Stomach (tissue), 19 donors: ENCODE measurements at regions of chr4 and their contacts with region 1.

Region 1: GRCh38 chr4:118352843-118353533 is at the start of gene PRSS12:
- DNase-seq: peak; percentile 77 to 92
- H3K4me3 ChIP-seq: peak within 1 kb of the TSS; percentile 58 to 67 (median 60)
- H3K27ac ChIP-seq: peak within 1 kb of the TSS; percentile 52 to 93 (median 77)
- H3K4me1 ChIP-seq: peaks cover 14 to 24% (median 21%) of the 10 kb centered on the region in 4 donors
- H3K27me3 ChIP-seq: peaks cover 0 to 62% (median 26%) of the 10 kb centered on the region in 3 donors
- CTCF ChIP-seq: peak in 5 of 7 experiments; percentile 18 to 85 (median 61)
- EP300 ChIP-seq: no peak
- POLR2A ChIP-seq: no peak
- total RNA-seq, gene PRSS12: 0.45 to 21.7 (median 14.0) TPM

Region 2: GRCh38 chr4:118280501-118281218 is 72.3 kb before region 1 on chr4:
- intact Hi-C with region 1: loop called (anchors 5 kb)
- DNase-seq: peak; percentile 55 to 91
- H3K4me3 ChIP-seq: peak overlapping the region in 2 of 4 donors; percentile 76 to 85
- H3K27ac ChIP-seq: peak overlapping the region in 4 of 5 donors; percentile 16 to 98 (median 95)
- H3K4me1 ChIP-seq: peaks cover 11 to 47% (median 32%) of the 10 kb centered on the region in 4 donors
- H3K27me3 ChIP-seq: no peaks in the 10 kb centered on the region
- CTCF ChIP-seq: peak in 5 of 7 experiments; percentile 5 to 46 (median 32)
- EP300 ChIP-seq: no peak
- POLR2A ChIP-seq: no peak